Calu3 (cell line): ENCODE measurements at regions of chr18 and their contacts with region 1.

Region 1: DNA sequence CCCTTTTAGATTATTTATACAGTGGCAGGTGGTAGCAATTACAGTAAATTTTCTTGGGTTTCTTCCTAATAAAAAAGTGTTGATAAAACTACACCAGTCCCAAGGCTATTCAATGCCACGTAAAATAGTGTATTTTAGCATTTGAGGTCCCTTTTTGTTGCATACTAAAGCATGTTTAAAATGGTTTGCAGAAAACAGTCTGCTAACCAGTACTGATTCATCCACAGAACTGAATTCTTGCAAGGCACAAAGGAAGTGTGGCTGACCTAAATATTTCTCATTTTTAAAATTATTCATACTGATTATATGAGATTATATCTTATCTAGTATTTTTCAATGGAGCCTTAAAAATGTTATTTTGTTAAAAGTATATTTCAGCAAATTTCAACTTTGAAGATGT is 98.1 kb downstream of the SMAD2 start:
- DNase-seq: no peak
- H3K4me3 Mint-ChIP-seq: no peak overlapping the region
- H3K27ac Mint-ChIP-seq: no peak overlapping the region
- H3K4me1 Mint-ChIP-seq: peaks cover 11% of the 10 kb centered on the region
- H3K27me3 Mint-ChIP-seq: no peaks in the 10 kb centered on the region
- CTCF ChIP-seq: no peak

Region 2: GRCh38 chr18:47919916-47920315 is 87.6 kb after region 1 on chr18:
- CTCF ChIA-PET with region 1: no interaction called
- intact Hi-C with region 1: loop called (anchors 5 kb)
- DNase-seq: no peak
- H3K4me3 Mint-ChIP-seq: no peak overlapping the region
- H3K27ac Mint-ChIP-seq: no peak overlapping the region
- H3K4me1 Mint-ChIP-seq: peaks cover 51% of the 10 kb centered on the region
- H3K27me3 Mint-ChIP-seq: no peaks in the 10 kb centered on the region
- CTCF ChIP-seq: no peak

Region 3: GRCh38 chr18:48252525-48252924 is 420.2 kb after region 1 on chr18:
- CTCF ChIA-PET with region 1: no interaction called
- intact Hi-C with region 1: no loop called
- DNase-seq: no peak
- H3K4me3 Mint-ChIP-seq: no peak overlapping the region
- H3K27ac Mint-ChIP-seq: no peak overlapping the region
- H3K4me1 Mint-ChIP-seq: no peaks in the 10 kb centered on the region
- H3K27me3 Mint-ChIP-seq: peaks cover 89% of the 10 kb centered on the region
- CTCF ChIP-seq: no peak